ENCODE measurements at regions of chr19 and their contacts with region 1.

Region 1: DNA sequence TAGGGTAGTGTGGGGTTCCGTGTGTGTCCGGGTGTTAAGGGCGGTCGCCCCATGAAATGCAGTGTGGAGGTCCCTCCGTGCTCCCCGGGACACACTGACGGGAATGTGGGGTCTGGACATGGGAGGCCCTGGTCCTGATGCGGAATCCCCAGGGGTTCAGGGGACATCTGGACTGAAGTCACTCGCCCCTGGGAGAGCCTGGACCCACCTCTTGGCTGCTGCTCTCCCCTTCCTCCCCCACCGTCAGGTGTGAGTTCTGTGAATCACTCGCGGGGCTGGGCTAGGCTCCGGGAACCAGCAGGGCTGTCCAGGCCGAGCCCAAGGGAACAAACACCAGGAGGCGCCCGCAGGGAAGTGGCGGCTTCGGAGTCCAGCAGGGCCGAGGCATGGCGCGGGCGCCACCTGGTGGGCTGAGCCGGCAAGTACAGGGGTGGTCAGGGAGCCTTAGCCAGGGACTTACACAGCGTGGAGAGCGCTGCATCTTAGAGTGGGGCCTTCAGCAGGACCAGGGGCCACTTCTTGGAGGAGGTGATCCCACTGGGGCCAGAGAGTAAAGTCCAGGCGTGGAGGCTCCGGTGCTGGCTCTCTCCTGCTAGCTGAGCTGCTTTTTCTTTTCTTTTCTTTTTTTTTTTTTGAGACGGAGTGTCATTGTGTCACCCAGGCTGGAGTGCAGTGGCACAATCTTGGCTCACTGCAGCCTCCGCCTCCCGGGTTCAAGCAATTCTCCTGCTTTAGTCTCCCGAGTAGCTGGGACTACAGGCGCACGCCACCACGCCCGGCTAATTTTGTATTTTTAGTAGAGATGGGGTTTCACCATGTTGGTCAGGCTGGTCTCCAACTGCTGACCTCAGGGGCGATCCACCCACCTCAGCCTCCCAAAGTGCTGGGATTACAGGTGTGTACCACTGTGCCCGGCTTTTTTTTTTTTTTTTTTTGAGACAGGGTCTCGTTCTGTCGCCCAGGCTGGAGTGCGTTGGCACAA is 20.1 kb downstream of the WTIP start:
- DNase-seq: peak; percentile 81
- H3K4me3 ChIP-seq: no peak overlapping the region
- H3K27ac ChIP-seq: no peak overlapping the region
- H3K4me1 ChIP-seq: peaks cover 3% of the 10 kb centered on the region
- H3K27me3 ChIP-seq: no peaks in the 10 kb centered on the region
- CTCF ChIP-seq: peak; percentile 92 to 100

Region 2: GRCh38 chr19:34479396-34479795 is 22.2 kb before region 1 on chr19:
- CTCF ChIA-PET with region 1: no interaction called
- dilution Hi-C with region 1: no loop called
- in situ Hi-C with region 1: no loop called
- intact Hi-C with region 1: loop called (anchors 2 kb)
- DNase-seq: no peak
- H3K4me3 ChIP-seq: no peak overlapping the region
- H3K27ac ChIP-seq: no peak overlapping the region
- H3K4me1 ChIP-seq: peaks cover 21% of the 10 kb centered on the region
- H3K27me3 ChIP-seq: no peaks in the 10 kb centered on the region
- CTCF ChIP-seq: no peak

Measured in mammary epithelial cell (primary cell).